ENCODE measurements at regions of chr3 and their contacts with region 1.

Region 1: DNA sequence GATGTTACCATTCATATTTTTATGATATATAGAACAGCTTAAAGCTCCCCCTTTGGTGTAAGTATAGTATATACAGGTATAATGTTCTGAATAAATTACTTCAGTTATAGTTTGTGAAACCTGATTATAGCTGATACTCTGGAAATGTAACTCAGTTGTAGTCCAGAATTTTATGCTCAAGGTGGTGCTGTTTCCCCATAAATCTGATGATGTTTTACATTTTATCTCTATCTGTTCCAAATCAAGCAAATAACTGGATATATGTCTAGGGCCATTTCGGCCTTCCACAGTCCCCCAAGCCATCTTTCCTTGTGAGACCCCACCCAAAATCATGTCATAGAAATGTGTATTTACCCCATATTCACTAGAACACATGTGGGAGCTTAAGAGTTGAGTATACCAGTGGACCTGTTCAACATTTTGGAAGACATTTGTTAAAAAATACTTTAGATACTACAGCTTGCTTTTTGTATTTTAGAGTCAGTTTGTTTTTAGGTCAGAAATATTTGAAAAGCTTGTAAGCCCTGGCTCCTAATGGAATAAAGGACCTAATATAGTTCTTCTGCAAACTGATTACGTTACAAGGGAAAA is 107.1 kb downstream of the ATG7 start:
- DNase-seq: no peak
- ATAC-seq: peak; percentile 85
- H3K4me3 ChIP-seq: peak overlapping the region in 1 of 2 donors; percentile 72
- H3K27ac ChIP-seq: peak overlapping the region; percentile 44 to 76
- H3K4me1 ChIP-seq: peaks cover 0 to 2% of the 10 kb centered on the region in 2 donors
- H3K27me3 ChIP-seq: no peaks in the 10 kb centered on the region

Region 2: GRCh38 chr3:11238057-11238456 is 141.3 kb before region 1 on chr3:
- intact Hi-C with region 1: no loop called
- DNase-seq: no peak
- ATAC-seq: no peak
- H3K4me3 ChIP-seq: no peak overlapping the region
- H3K27ac ChIP-seq: no peak overlapping the region
- H3K4me1 ChIP-seq: peaks cover 0 to 2% of the 10 kb centered on the region in 2 donors
- H3K27me3 ChIP-seq: no peaks in the 10 kb centered on the region

Region 3: DNA sequence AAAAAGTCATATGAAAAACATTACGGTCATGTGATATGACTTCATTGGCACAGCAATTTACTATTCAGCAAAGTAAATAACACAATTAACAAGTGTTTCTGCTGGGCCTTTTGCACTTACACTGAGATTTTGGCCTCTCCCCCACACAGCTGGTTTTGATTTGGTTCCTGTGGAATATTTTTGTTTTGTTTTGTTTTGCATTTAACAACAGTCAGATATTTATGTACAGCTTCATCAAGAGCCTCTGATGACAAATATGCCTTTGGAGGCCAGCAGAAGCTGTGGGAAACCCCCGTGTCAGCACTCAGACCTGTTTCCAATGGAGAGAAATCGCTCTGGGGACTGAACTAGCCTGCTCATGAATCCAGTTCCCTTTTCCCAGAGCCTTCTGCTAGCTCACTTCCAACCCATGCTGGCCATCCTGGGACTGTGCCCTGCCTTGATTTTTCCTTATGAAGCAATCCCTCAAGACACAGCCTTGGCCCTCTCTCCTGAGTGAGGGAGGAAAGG is 54.7 kb after region 1 on chr3:
- intact Hi-C with region 1: no loop called
- DNase-seq: peak in 1 of 2 donors; percentile 73
- ATAC-seq: peak; percentile 88
- H3K4me3 ChIP-seq: no peak overlapping the region
- H3K27ac ChIP-seq: peak overlapping the region in 1 of 2 donors; percentile 94
- H3K4me1 ChIP-seq: peaks cover 2 to 3% of the 10 kb centered on the region in 2 donors
- H3K27me3 ChIP-seq: no peaks in the 10 kb centered on the region

Region 4: GRCh38 chr3:11582191-11582968 is 203.1 kb after region 1 on chr3:
- intact Hi-C with region 1: no loop called
- DNase-seq: peak; percentile 73 to 83
- ATAC-seq: peak; percentile 80
- H3K4me3 ChIP-seq: peak overlapping the region in 1 of 2 donors; percentile 22
- H3K27ac ChIP-seq: peak overlapping the region in 1 of 2 donors; percentile 82
- H3K4me1 ChIP-seq: peaks cover 2 to 3% of the 10 kb centered on the region in 2 donors
- H3K27me3 ChIP-seq: no peaks in the 10 kb centered on the region

Region 5: GRCh38 chr3:11651900-11652299 is 272.6 kb after region 1 on chr3:
- intact Hi-C with region 1: loop called (anchors 2 kb)
- DNase-seq: no peak
- ATAC-seq: no peak
- H3K4me3 ChIP-seq: no peak overlapping the region
- H3K27ac ChIP-seq: no peak overlapping the region
- H3K4me1 ChIP-seq: peaks cover 0 to 2% of the 10 kb centered on the region in 2 donors
- H3K27me3 ChIP-seq: no peaks in the 10 kb centered on the region

Region 6: GRCh38 chr3:11719406-11720230 is 340.3 kb after region 1 on chr3:
- intact Hi-C with region 1: loop called in 1 of 2 experiments (anchors 5 kb)
- DNase-seq: peak; percentile 84 to 91
- ATAC-seq: peak; percentile 77
- H3K4me3 ChIP-seq: peak overlapping the region; percentile 73 to 83
- H3K27ac ChIP-seq: peak overlapping the region; percentile 87 to 94
- H3K4me1 ChIP-seq: peaks cover 0 to 7% of the 10 kb centered on the region in 2 donors
- H3K27me3 ChIP-seq: no peaks in the 10 kb centered on the region

Region 7: DNA sequence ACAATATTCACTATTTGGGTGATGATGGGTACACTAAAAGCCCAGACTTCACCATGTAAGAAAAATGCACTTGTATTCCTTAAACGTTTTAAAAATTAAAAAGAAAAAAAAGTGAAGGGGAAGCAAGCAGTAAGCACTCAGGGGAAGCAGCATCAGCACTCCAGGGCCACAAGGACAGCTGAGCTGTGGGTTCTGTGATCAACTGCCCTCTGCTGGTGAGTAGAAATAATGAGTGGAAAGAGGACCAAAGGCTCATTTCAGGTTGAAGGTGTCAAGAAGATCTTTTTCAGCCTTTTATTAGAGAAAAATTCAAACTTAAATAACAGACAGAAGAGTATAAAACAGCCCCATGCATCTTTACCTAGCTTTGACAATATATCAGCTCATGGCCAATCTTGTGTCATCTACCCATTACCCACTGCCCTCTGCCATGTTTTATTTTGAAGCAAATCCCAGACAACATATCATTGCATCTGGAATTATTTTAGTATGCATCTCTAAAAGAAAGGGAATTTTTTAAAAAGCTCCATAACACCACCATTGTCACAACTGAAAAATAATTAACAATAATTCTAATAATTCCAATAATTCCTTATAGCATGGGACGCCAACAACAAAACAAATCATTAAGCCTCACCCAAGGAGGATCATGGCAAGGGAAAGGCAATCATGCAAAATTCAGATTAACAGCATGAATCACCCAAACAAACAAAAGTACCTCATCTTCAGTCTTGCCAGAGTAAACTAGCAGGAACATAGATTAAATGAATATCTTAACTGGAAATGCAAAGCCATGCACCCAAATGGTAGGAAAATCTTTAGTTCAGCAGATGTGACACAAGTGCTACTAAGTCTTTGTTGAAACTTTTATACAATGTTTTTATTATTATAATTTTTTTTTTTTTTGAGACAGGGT is 424.9 kb after region 1 on chr3:
- intact Hi-C with region 1: loop called (anchors 2 kb)
- DNase-seq: peak in 1 of 2 donors; percentile 60
- ATAC-seq: peak; percentile 83
- H3K4me3 ChIP-seq: no peak overlapping the region
- H3K27ac ChIP-seq: no peak overlapping the region
- H3K4me1 ChIP-seq: no peaks in the 10 kb centered on the region
- H3K27me3 ChIP-seq: no peaks in the 10 kb centered on the region